Calu3 (cell line): ENCODE measurements at regions of chr5 and their contacts with region 1.

Region 1: DNA sequence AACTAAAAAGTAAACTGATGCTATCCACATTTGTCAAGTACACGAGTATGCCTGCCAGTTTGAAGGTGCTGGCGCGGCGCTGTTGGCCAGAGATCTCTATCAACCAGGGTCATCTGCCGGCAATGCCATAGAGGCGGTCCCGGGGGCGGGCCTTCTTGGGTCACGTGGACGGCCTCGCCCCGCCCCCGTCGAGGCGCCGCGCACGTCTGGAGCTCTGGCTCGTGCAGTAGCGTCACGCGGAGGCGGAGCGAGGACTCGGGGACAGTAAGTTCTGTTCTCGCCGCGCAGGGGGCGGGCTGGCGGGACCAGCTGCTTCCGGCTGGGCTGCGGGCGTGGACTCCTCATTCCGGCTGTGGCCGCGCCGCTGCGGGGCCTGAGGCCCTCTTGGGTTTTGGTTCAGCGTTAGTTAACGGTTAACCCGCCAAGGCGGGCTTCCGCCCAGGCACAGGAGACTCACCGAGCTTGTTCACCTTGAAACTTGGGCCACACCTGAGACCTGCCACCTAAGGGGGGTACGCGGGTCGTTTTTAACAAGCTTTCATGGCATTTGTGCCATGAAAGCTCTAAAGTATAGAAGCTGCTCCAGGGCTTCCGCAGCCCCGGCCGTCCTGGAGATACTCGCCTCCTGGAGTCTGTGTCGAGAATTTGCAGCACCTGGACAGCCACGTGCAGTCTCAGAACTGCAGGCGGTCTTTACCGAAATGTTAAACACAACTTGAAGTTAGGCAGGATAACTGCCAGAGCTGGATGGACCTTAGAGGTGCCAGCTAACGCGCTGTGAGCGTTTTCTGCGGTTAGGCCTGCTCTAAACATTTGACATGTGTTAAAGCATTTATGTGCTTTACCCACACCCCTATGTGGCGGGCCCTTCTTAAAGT is at the start of gene RFESD:
- DNase-seq: peak; percentile 100
- H3K4me3 Mint-ChIP-seq: peak within 1 kb of the TSS; percentile 80
- H3K27ac Mint-ChIP-seq: peak within 1 kb of the TSS; percentile 75
- H3K4me1 Mint-ChIP-seq: peaks cover 18% of the 10 kb centered on the region
- H3K27me3 Mint-ChIP-seq: no peaks in the 10 kb centered on the region
- CTCF ChIP-seq: peak; percentile 47
- total RNA-seq, gene RFESD: 1.8 and 2.9 TPM in 2 replicates

Region 2: DNA sequence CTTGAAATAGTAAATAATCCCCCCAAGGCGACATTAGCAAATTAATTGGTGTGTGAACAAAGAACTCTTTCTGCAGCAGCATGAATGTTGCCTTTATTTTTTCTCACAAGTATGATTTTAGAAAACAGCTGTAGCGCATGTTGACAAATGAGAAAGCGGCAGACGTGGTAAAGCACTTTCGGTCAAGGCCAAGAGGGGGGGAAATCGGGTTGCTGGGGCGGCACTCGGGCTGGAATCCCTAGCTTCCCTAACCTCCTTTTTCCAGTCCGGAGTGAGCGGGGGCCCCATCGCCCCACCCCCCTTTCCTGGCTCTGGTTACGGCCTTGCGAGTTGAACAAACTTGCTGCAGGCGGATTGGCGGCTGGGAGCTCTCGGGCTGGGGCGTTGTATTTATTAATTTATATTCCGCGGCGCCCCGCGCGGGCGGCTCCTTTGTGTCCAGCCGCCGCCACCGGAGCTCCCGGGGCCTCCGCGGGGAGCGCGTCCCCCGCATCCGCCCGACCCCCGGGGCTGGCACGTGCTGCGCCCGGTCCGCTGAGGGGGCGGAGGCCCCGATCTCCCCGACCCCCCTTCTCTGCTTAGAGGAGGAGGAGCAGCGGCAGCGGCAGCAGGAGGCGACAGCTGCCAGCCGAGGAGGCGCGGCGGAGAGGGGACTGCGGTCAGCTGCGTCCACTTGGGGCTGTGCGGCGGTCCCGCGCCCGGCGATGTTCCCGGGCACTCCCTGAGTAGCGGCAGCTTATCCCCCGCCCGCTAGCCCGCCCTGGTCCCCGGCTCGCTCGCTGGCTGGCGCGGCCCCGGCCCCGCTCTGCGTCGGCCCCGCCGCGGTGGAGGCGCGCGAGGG is 84.2 kb after region 1 on chr5 and contains the start of gene RHOBTB3:
- CTCF ChIA-PET with region 1: interaction called, 3 read pairs
- intact Hi-C with region 1: loop called (anchors 5 kb)
- DNase-seq: peak; percentile 85
- H3K4me3 Mint-ChIP-seq: peak within 1 kb of the TSS; percentile 95
- H3K27ac Mint-ChIP-seq: peak within 1 kb of the TSS; percentile 86
- H3K4me1 Mint-ChIP-seq: peaks cover 54% of the 10 kb centered on the region
- H3K27me3 Mint-ChIP-seq: no peaks in the 10 kb centered on the region
- CTCF ChIP-seq: no peak
- total RNA-seq, gene RHOBTB3: 29.5 and 41.1 TPM in 2 replicates

Region 3: GRCh38 chr5:95846554-95847260 is 199.9 kb after region 1 on chr5:
- CTCF ChIA-PET with region 1: interaction called, 6 read pairs
- intact Hi-C with region 1: loop called (anchors 1 kb)
- DNase-seq: peak; percentile 76
- H3K4me3 Mint-ChIP-seq: no peak overlapping the region
- H3K27ac Mint-ChIP-seq: no peak overlapping the region
- H3K4me1 Mint-ChIP-seq: peaks cover 15% of the 10 kb centered on the region
- H3K27me3 Mint-ChIP-seq: no peaks in the 10 kb centered on the region
- CTCF ChIP-seq: peak; percentile 83

Region 4: DNA sequence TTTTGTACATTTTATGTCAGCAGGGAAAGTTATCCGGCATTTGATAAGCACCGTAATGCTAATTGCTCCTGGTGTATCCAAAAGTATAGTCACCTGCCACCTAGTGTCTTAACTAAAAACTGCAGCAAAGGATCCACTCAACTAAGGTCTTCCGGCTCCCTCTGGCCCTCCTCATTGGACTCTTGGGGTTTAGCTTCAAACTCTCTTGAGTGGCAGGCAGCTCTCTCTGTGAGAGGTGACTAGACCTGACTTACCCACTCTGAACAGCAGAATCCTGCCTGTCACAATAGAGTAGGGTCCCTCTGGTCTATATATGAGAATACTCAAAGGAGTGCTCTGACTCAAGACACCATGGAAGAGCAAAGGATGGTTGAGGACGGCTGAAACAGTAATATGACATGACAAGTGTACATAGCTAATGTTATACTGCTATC is 955.0 kb after region 1 on chr5:
- CTCF ChIA-PET with region 1: no interaction called
- intact Hi-C with region 1: loop called (anchors 10 kb)
- DNase-seq: peak; percentile 79
- H3K4me3 Mint-ChIP-seq: no peak overlapping the region
- H3K27ac Mint-ChIP-seq: no peak overlapping the region
- H3K4me1 Mint-ChIP-seq: no peaks in the 10 kb centered on the region
- H3K27me3 Mint-ChIP-seq: peaks cover 14% of the 10 kb centered on the region
- CTCF ChIP-seq: peak; percentile 73